ENCODE measurements at regions of chr3 and their contacts with region 1.

Region 1: DNA sequence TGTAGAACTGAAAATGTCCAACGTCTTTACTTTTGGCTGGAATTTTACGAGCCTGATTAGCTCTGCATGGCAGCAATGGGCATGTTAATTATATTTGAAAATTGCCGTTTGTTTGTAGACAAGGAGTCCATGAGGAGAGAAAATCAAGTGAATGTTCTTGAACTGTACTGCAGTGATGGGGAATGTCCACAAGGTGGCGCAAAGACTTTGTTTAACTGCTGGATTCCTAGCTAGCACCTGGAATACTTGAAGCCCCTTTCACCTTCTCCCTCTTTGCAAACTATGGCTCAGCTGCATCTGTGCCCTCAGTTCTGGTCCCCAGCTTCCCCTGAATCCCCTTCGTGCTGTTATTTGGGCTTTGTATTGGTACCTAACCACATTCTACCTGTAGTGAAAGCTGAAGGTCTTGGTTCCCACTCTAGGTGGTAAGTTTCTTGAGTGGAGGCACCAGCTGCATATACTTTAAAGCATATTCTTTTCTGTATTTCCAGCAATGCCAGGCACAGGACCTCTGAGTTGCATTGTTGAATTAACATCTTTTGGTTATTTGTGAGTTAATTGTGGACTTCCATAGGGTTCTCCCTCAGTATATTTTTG is 25.3 kb downstream of the EXOG start:
- DNase-seq: peak; percentile 69
- H3K4me3 ChIP-seq: no peak overlapping the region
- H3K27ac ChIP-seq: no peak overlapping the region
- H3K27me3 ChIP-seq: no peaks in the 10 kb centered on the region
- CTCF ChIP-seq: peak; percentile 86

Region 2: GRCh38 chr3:38834110-38834509 is 312.6 kb after region 1 on chr3:
- in situ Hi-C with region 1: loop called (anchors 25 kb)
- DNase-seq: peak; percentile 89
- H3K4me3 ChIP-seq: no peak overlapping the region
- H3K27ac ChIP-seq: peak overlapping the region; percentile 78
- H3K27me3 ChIP-seq: no peaks in the 10 kb centered on the region
- CTCF ChIP-seq: no peak

Region 3: DNA sequence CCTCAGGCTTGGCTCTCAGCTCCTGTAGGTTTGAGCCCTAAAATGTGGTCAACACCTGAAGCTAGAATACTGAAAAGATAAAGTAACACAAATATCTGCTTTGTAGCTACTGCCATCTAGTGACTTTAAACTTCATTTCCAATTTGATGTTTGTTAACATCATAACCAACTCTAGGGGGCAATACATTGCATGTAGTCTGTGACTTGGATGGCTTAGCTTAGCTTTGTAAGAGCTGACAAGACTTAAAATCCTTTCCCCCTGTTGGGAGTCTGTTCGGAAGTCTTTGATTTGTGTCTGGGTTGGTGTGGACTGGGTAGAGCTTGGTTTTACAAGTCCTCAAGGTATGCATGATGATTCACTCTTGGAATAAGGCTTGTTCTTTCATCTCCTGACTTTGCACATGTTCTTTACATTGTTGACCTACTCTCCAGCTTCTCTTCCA is 478.5 kb after region 1 on chr3:
- in situ Hi-C with region 1: loop called (anchors 25 kb)
- DNase-seq: no peak
- H3K4me3 ChIP-seq: no peak overlapping the region
- H3K27ac ChIP-seq: no peak overlapping the region
- H3K27me3 ChIP-seq: no peaks in the 10 kb centered on the region
- CTCF ChIP-seq: peak; percentile 72